Adrenal gland (tissue), 19 donors: ENCODE measurements at regions of chr1 and their contacts with region 1.

Region 1: GRCh38 chr1:24694380-24694843 is 50.8 kb upstream of the CLIC4 start:
- DNase-seq: no peak
- H3K4me3 ChIP-seq: no peak overlapping the region
- H3K27ac ChIP-seq: peak overlapping the region in 2 of 5 donors; percentile 48 to 69
- H3K4me1 ChIP-seq: peaks cover 0 to 12% of the 10 kb centered on the region in 2 donors
- H3K27me3 ChIP-seq: no peaks in the 10 kb centered on the region
- CTCF ChIP-seq: no peak
- POLR2A ChIP-seq: no peak

Region 2: GRCh38 chr1:24443241-24443656 is 251.2 kb before region 1 on chr1:
- intact Hi-C with region 1: no loop called
- DNase-seq: no peak
- H3K4me3 ChIP-seq: no peak overlapping the region
- H3K27ac ChIP-seq: no peak overlapping the region
- H3K4me1 ChIP-seq: no peaks in the 10 kb centered on the region
- H3K27me3 ChIP-seq: no peaks in the 10 kb centered on the region
- CTCF ChIP-seq: no peak
- POLR2A ChIP-seq: no peak

Region 3: GRCh38 chr1:24558902-24559791 is 135.3 kb before region 1 on chr1:
- intact Hi-C with region 1: no loop called
- DNase-seq: peak in 6 of 7 donors; percentile 33 to 70 (median 50)
- H3K4me3 ChIP-seq: no peak overlapping the region
- H3K27ac ChIP-seq: no peak overlapping the region
- H3K4me1 ChIP-seq: peaks cover 0 to 7% of the 10 kb centered on the region in 2 donors
- H3K27me3 ChIP-seq: peaks cover 18% of the 10 kb centered on the region
- CTCF ChIP-seq: no peak
- POLR2A ChIP-seq: no peak

Region 4: DNA sequence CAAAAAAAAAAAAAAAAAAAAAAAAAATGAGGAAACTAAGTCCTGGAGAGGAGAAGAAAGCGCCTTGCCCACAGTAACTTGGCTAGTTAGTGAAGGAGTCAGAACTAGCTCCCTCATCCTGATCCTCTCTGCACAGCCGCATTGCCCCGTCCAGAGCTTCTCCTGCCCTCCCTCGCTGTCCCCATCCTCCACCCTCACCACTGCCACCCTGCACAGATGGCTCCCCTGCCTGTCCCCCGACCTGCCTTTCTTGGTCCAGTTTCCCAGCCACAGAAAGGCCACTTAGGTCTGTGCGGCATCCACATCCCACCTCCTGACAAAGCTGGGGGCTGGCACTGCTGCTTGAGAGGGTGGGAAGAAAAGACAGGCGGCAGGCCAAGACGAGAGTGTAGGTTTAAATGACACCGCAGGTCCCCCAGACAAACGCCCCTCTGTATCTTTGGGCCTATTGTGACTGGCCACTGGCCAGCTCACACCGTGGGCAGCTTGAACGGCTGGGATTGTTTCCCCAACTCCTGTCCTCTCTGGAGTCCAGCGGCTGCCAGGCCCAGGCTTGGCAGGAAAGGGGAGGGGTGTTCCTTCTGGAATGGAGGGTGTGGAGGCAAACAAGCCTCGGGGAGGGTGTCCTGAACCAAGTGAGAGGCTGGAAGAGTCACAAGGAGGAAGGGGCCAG is 118.4 kb before region 1 on chr1:
- intact Hi-C with region 1: no loop called
- DNase-seq: no peak
- H3K4me3 ChIP-seq: no peak overlapping the region
- H3K27ac ChIP-seq: no peak overlapping the region
- H3K4me1 ChIP-seq: no peaks in the 10 kb centered on the region
- H3K27me3 ChIP-seq: no peaks in the 10 kb centered on the region
- CTCF ChIP-seq: no peak
- POLR2A ChIP-seq: no peak

Region 5: GRCh38 chr1:24732186-24732885 is 37.9 kb after region 1 on chr1:
- intact Hi-C with region 1: loop called in 1 of 2 experiments (anchors 5 kb)
- DNase-seq: no peak
- H3K4me3 ChIP-seq: no peak overlapping the region
- H3K27ac ChIP-seq: no peak overlapping the region
- H3K4me1 ChIP-seq: peaks cover 8 to 31% of the 10 kb centered on the region in 2 donors
- H3K27me3 ChIP-seq: no peaks in the 10 kb centered on the region
- CTCF ChIP-seq: no peak
- POLR2A ChIP-seq: no peak

Region 6: GRCh38 chr1:24744911-24745710 is 50.7 kb after region 1 on chr1 and contains the start of gene CLIC4:
- intact Hi-C with region 1: no loop called
- DNase-seq: peak; percentile 100
- H3K4me3 ChIP-seq: peak within 1 kb of the TSS; percentile 2 to 100 (median 42)
- H3K27ac ChIP-seq: peak within 1 kb of the TSS in 4 of 5 donors; percentile 90 to 96 (median 92)
- H3K4me1 ChIP-seq: peaks cover 0 to 23% of the 10 kb centered on the region in 2 donors
- H3K27me3 ChIP-seq: no peaks in the 10 kb centered on the region
- CTCF ChIP-seq: peak in 1 of 6 experiments; percentile 20
- POLR2A ChIP-seq: peak; percentile 98 to 99
- total RNA-seq, gene CLIC4: 26.8 to 166 (median 117) TPM

Region 7: GRCh38 chr1:24830680-24831272 is 136.4 kb after region 1 on chr1:
- intact Hi-C with region 1: loop called (anchors 2 to 5 kb)
- DNase-seq: no peak
- H3K4me3 ChIP-seq: no peak overlapping the region
- H3K27ac ChIP-seq: no peak overlapping the region
- H3K4me1 ChIP-seq: peaks cover 11 to 47% of the 10 kb centered on the region in 2 donors
- H3K27me3 ChIP-seq: no peaks in the 10 kb centered on the region
- CTCF ChIP-seq: peak; percentile 68 to 95 (median 83)
- POLR2A ChIP-seq: no peak